ENCODE measurements at regions of chr6 and their contacts with region 1.

Region 1: DNA sequence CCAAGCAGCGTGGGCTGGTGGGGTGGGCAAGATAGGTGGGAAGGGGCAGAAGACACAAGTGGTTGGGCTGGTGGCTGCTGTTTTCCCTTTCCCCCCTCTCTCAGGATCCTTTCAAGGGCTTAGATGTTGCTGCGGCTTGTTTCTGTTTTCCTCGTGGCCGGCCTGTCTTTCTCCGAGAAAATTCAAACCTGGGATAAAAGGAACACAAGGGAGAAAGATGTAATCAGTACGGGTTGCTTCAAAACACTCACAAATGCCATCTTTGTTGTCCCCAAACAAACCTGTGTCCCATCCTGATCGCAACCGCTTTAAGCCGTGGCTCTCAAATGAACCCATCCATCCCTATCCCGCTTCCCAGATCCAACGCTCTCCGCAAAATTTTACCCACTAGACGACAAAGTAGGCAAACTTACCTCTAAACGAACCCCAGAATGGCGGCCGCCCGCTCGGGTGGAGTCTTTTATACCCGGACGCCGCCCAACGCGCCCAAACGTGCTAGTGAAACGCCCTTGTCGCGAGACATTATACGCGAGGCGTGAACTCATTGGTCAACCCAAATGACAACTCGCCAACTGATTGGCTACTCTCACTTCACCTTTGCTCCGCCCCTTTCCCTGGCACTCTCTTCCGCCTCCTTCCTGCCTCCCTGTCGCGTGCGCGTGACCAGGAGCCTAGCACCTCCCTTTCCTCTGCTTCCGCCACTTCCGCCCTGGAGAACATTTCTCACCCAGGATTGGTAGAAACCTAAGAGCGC is at the start of gene PPP1R10:
- DNase-seq: peak; percentile 99
- H3K4me3 Mint-ChIP-seq: peak within 1 kb of the TSS; percentile 91
- H3K27ac Mint-ChIP-seq: peak within 1 kb of the TSS; percentile 98
- H3K4me1 Mint-ChIP-seq: peaks cover 43% of the 10 kb centered on the region
- H3K27me3 Mint-ChIP-seq: peaks cover 6% of the 10 kb centered on the region
- total RNA-seq, gene PPP1R10: 124 and 126 TPM in 2 replicates

Region 2: GRCh38 chr6:30489081-30490025 is 127.6 kb before region 1 on chr6 and contains the start of gene HLA-E:
- intact Hi-C with region 1: loop called (anchors 1 kb)
- DNase-seq: peak; percentile 91
- H3K4me3 Mint-ChIP-seq: peak within 1 kb of the TSS; percentile 97
- H3K27ac Mint-ChIP-seq: peak within 1 kb of the TSS; percentile 99
- H3K4me1 Mint-ChIP-seq: peaks cover 64% of the 10 kb centered on the region
- H3K27me3 Mint-ChIP-seq: peaks cover 3% of the 10 kb centered on the region
- total RNA-seq, gene HLA-E: 476 and 483 TPM in 2 replicates

Region 3: DNA sequence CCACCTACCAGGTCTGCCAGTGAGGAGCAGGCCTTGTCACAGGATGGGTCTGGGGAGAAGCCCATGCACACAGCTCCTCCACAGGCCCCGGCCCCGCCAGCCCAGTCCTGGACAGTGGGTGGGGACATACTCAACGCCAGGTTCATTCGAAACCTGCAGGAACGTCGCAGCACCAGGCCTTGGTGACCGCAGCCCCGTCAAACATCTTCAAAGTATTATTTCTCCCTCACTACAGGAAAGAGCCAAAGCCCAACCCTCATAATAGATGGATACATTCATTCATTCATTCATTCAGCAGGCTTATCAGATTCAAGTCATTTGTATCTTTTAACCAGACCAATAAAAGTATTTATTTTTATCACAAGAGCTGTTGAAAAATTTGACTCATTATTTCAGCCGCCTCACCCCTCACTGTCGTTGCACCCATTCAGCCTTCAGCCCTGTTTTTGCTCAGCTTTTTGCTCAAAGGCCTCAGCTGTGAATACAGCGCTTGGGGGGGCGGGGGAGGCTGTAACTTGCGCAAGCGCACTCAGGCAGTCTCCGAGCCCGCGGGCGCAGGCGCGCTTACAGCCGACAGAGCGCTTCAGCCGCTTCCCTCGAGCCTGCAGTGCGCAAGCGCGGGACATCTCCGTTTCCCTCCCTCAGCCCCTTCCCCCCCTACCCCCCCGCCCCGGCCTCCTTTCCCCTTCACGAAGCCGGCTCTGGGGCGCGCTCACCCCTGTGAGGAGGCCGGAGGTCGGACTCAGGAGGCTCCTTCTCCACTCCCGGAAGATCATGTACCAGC is 29.7 kb after region 1 on chr6 and contains the start of gene C6orf136:
- intact Hi-C with region 1: loop called (anchors 1 kb)
- DNase-seq: peak; percentile 89
- H3K4me3 Mint-ChIP-seq: peak within 1 kb of the TSS; percentile 90
- H3K27ac Mint-ChIP-seq: peak within 1 kb of the TSS; percentile 91
- H3K4me1 Mint-ChIP-seq: peaks cover 23% of the 10 kb centered on the region
- H3K27me3 Mint-ChIP-seq: no peaks in the 10 kb centered on the region
- total RNA-seq, gene C6orf136: 23.9 and 36.0 TPM in 2 replicates

Region 4: DNA sequence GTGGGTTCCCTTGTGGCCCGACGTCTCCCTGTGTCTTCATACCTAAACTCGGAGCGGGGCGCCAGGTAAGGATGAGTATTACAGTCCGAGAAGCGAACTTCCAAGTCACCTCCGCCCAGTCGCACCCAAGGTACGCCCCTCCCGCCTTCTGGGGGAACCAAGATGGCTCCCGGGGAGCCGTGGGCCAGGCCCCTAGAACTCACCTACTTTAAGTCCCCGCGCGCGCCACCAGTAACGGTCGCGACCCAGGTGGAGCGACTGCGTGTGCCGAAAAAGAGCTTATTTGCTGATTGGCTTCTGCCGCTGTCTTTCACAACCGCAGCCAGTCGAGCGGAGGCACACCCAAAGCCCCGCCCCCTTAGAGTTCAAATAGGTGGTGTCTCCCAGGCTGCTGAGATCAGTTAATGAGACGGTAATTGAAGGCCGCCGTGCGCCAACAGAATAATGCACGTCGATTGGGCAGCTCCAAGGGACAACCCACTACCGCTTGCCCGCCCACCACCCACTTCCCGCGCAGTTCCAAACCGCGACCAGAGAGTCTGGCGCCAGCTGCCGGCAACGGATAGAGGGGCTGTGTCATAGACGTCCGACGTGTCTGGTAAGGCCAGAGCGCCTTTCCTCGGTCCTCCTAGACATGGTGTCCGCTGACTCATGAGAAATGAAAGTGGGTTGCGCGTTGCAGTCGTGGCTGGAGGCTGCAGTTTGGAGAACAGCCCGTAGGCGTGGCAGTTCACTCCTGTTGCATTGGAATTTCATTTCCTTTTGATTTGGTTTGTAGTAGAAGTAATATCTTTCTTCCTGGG is 100.3 kb after region 1 on chr6 and contains the start of gene MDC1:
- intact Hi-C with region 1: loop called (anchors 1 kb)
- DNase-seq: peak; percentile 99
- H3K4me3 Mint-ChIP-seq: peak within 1 kb of the TSS; percentile 91
- H3K27ac Mint-ChIP-seq: peak within 1 kb of the TSS; percentile 99
- H3K4me1 Mint-ChIP-seq: peaks cover 51% of the 10 kb centered on the region
- H3K27me3 Mint-ChIP-seq: no peaks in the 10 kb centered on the region
- total RNA-seq, gene MDC1: 93.7 and 95.7 TPM in 2 replicates

Region 5: DNA sequence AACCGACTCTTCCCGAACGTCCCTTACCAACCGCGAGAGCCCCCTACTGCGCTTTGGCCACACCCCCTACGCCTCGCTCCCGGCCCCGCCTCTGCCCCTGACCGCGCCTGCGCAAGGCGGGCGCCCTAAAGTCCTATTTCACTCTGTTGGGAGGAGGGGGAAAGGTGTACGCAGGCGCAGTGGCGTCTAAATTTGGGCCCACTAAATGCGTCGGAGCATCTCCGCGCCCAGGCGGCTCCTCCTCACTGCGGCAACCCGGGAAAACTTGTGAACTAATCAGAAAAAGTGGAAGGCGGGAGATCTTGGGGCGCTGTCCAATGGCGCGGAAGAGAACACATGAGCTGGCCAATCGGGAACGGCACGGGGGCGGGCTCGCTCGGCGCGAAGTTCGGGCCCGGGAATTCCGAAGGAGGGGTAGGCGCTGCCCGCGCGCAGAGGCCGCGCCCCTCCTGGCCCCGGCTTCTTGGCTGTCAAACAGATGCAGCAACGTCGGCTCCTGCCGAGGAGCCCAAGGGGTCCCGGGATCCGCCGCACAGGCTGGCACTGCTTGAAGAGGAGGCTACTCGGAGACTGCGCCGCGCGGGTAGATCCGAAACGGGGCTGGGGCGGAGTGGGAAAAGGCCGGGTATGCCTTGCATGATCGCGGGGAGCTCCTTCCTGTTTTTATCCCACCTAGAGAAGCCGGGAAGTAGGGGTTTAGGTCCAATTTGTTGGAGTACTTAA is 541.3 kb after region 1 on chr6 and contains the start of gene TCF19:
- intact Hi-C with region 1: loop called (anchors 2 kb)
- DNase-seq: peak; percentile 99
- H3K4me3 Mint-ChIP-seq: peak within 1 kb of the TSS; percentile 82
- H3K27ac Mint-ChIP-seq: peak within 1 kb of the TSS; percentile 75
- H3K4me1 Mint-ChIP-seq: peaks cover 29% of the 10 kb centered on the region
- H3K27me3 Mint-ChIP-seq: no peaks in the 10 kb centered on the region
- total RNA-seq, gene TCF19: 75.9 and 78.4 TPM in 2 replicates

Region 6: GRCh38 chr6:32177788-32178546 is 1561.0 kb after region 1 on chr6 and contains the start of gene RNF5:
- intact Hi-C with region 1: loop called (anchors 2 kb)
- DNase-seq: peak; percentile 91
- H3K4me3 Mint-ChIP-seq: peak within 1 kb of the TSS; percentile 95
- H3K27ac Mint-ChIP-seq: peak within 1 kb of the TSS; percentile 94
- H3K4me1 Mint-ChIP-seq: peaks cover 60% of the 10 kb centered on the region
- H3K27me3 Mint-ChIP-seq: no peaks in the 10 kb centered on the region
- total RNA-seq, gene RNF5: 58.1 and 60.4 TPM in 2 replicates

Measured in activated T-helper 1 cell treated with anti-CD3 and anti-CD28 coated beads, Interleukin-12 subunit alpha, Interleukin-12 subunit beta, Interleukin-2, Interleukin-4 antibody, amounts not matched to agents 30 ng/mL and 10 ng/mL and 1 ng/mL, durations not matched to agents 14 hours and 24 hours and 36 hours (primary cell).